ENCODE measurements at regions of chr4 and their contacts with region 1.

Region 1: GRCh38 chr4:65007841-65008439 is 598.7 kb upstream of the TECRL start:
- DNase-seq: peak; percentile 68
- H3K4me3 Mint-ChIP-seq: no peak overlapping the region
- H3K27ac Mint-ChIP-seq: no peak overlapping the region
- H3K4me1 Mint-ChIP-seq: no peaks in the 10 kb centered on the region
- H3K27me3 Mint-ChIP-seq: no peaks in the 10 kb centered on the region
- CTCF ChIP-seq: peak; percentile 62

Region 2: DNA sequence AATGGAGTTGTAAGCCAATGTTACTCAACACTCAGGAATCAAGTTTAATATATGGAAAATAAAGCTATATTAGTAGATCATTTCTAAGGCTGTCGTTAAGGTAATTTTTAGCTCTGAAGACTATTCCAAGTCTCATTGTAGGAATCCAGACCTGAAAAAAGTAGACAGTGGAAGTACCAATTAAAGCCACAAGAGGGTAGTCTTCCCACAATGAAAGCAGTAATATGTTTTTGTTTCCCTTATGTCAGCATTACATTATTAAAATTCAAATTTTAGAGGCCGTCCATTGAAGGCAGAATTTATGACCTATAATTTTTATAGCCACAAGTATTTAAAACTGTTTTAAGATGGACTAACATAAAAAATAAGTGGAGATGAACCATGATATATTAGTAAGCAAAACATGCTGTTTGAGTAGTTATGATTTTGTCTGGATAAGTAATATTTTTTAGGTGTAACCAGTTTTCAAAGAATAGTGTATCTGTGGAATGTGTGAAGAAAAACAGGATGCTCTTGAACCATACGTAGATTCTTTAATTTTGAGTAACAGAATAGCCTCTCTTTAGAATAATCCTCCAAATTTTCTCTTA is 226.1 kb before region 1 on chr4:
- CTCF ChIA-PET with region 1: interaction called, 4 read pairs
- POLR2A ChIA-PET with region 1: no interaction called
- intact Hi-C with region 1: loop called (anchors 5 kb)
- DNase-seq: peak; percentile 57
- H3K4me3 Mint-ChIP-seq: no peak overlapping the region
- H3K27ac Mint-ChIP-seq: no peak overlapping the region
- H3K4me1 Mint-ChIP-seq: no peaks in the 10 kb centered on the region
- H3K27me3 Mint-ChIP-seq: no peaks in the 10 kb centered on the region
- CTCF ChIP-seq: peak; percentile 60

Region 3: DNA sequence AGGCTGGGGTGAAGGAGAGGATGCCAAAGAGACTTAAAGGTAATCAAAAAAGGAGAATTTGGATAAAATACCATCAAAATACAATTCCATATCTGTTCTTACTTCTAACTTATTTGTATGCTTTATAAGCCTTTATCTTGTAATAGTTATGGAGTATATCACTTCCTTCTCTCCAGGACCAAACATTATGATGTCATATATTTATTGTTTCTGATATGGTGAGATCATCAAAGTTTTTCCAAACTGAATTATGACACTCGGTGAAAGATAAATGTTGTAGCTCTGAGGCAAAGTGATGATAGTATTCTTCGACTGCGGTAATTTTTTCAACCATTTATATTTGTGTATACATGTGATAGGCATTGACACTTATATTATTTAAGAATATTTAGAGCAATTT is 20.7 kb after region 1 on chr4:
- CTCF ChIA-PET with region 1: interaction called, 10 read pairs
- POLR2A ChIA-PET with region 1: no interaction called
- intact Hi-C with region 1: no loop called
- DNase-seq: no peak
- H3K4me3 Mint-ChIP-seq: no peak overlapping the region
- H3K27ac Mint-ChIP-seq: no peak overlapping the region
- H3K4me1 Mint-ChIP-seq: no peaks in the 10 kb centered on the region
- H3K27me3 Mint-ChIP-seq: no peaks in the 10 kb centered on the region
- CTCF ChIP-seq: no peak

Region 4: GRCh38 chr4:65046192-65047101 is 38.5 kb after region 1 on chr4:
- CTCF ChIA-PET with region 1: interaction called, 14 read pairs
- POLR2A ChIA-PET with region 1: no interaction called
- intact Hi-C with region 1: no loop called
- DNase-seq: peak; percentile 78
- H3K4me3 Mint-ChIP-seq: peak overlapping the region; percentile 22
- H3K27ac Mint-ChIP-seq: peak overlapping the region; percentile 79
- H3K4me1 Mint-ChIP-seq: peaks cover 22% of the 10 kb centered on the region
- H3K27me3 Mint-ChIP-seq: no peaks in the 10 kb centered on the region
- CTCF ChIP-seq: no peak

Region 5: GRCh38 chr4:65170768-65171514 is 163.0 kb after region 1 on chr4:
- CTCF ChIA-PET with region 1: no interaction called
- POLR2A ChIA-PET with region 1: no interaction called
- intact Hi-C with region 1: no loop called
- DNase-seq: no peak
- H3K4me3 Mint-ChIP-seq: no peak overlapping the region
- H3K27ac Mint-ChIP-seq: no peak overlapping the region
- H3K4me1 Mint-ChIP-seq: no peaks in the 10 kb centered on the region
- H3K27me3 Mint-ChIP-seq: no peaks in the 10 kb centered on the region
- CTCF ChIP-seq: no peak

Region 6: GRCh38 chr4:66169341-66169740 is 1161.4 kb after region 1 on chr4:
- CTCF ChIA-PET with region 1: no interaction called
- POLR2A ChIA-PET with region 1: no interaction called
- intact Hi-C with region 1: loop called (anchors 2 kb)
- DNase-seq: peak; percentile 52
- H3K4me3 Mint-ChIP-seq: no peak overlapping the region
- H3K27ac Mint-ChIP-seq: peak overlapping the region; percentile 25
- H3K4me1 Mint-ChIP-seq: no peaks in the 10 kb centered on the region
- H3K27me3 Mint-ChIP-seq: no peaks in the 10 kb centered on the region
- CTCF ChIP-seq: peak; percentile 37

Region 7: GRCh38 chr4:66688674-66689073 is 1680.7 kb after region 1 on chr4:
- CTCF ChIA-PET with region 1: interaction called, 14 read pairs
- POLR2A ChIA-PET with region 1: no interaction called
- intact Hi-C with region 1: loop called (anchors 2 kb)
- DNase-seq: peak; percentile 33
- H3K4me3 Mint-ChIP-seq: no peak overlapping the region
- H3K27ac Mint-ChIP-seq: no peak overlapping the region
- H3K4me1 Mint-ChIP-seq: no peaks in the 10 kb centered on the region
- H3K27me3 Mint-ChIP-seq: no peaks in the 10 kb centered on the region
- CTCF ChIP-seq: peak; percentile 29

Measured in MCF 10A (cell line).